HCT116 (cell line): ENCODE measurements at regions of chr3 and their contacts with region 1.

Region 1: GRCh38 chr3:10772271-10773161 is 43.5 kb upstream of the SLC6A11 start:
- DNase-seq: no peak
- ATAC-seq: peak; percentile 94
- H3K4me3 ChIP-seq: no peak overlapping the region
- H3K27ac ChIP-seq: no peak overlapping the region
- H3K4me1 ChIP-seq: peaks cover 0 to 6% of the 10 kb centered on the region in 2 experiments; a peak in 2 of 4 replicates
- H3K27me3 ChIP-seq: peaks cover 13% of the 10 kb centered on the region; the same call in 1 of the 2 replicates
- CTCF ChIP-seq: peak; percentile 70 to 99 (median 90)
- POLR2A ChIP-seq: no peak
- RAD21 ChIP-seq: peak; percentile 60

Region 2: GRCh38 chr3:10122724-10123123 is 649.8 kb before region 1 on chr3:
- CTCF ChIA-PET with region 1: no interaction called
- POLR2A ChIA-PET with region 1: no interaction called
- RAD21 ChIA-PET with region 1: no interaction called
- intact Hi-C with region 1: no loop called
- DNase-seq: no peak
- ATAC-seq: no peak
- H3K4me3 ChIP-seq: no peak overlapping the region
- H3K27ac ChIP-seq: no peak overlapping the region
- H3K4me1 ChIP-seq: no peaks in the 10 kb centered on the region
- H3K27me3 ChIP-seq: no peaks in the 10 kb centered on the region
- CTCF ChIP-seq: no peak
- POLR2A ChIP-seq: no peak
- RAD21 ChIP-seq: no peak

Region 3: DNA sequence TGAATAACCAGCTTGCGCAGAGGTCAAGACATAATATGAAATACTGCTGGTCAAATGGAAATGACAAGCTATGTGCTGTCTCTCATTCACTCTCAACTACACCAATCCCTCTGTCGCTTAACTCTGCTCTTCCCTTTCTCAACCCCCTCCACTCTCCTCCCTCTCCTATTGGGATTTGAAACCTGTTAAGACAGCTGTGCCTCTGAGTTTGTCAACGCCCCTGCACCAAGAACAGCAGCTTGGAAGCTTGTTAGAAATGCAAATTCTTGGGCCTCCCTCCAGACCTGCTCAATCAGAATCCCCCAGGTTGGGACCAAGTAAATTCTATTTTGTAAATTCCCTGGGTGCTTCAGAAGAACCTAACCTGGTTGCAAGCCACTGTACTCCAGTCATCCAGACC is 117.4 kb before region 1 on chr3:
- CTCF ChIA-PET with region 1: no interaction called
- POLR2A ChIA-PET with region 1: no interaction called
- RAD21 ChIA-PET with region 1: no interaction called
- intact Hi-C with region 1: no loop called
- DNase-seq: no peak
- ATAC-seq: no peak
- H3K4me3 ChIP-seq: no peak overlapping the region
- H3K27ac ChIP-seq: no peak overlapping the region
- H3K4me1 ChIP-seq: no peaks in the 10 kb centered on the region
- H3K27me3 ChIP-seq: peaks cover 35% of the 10 kb centered on the region
- CTCF ChIP-seq: no peak
- POLR2A ChIP-seq: no peak
- RAD21 ChIP-seq: no peak

Region 4: DNA sequence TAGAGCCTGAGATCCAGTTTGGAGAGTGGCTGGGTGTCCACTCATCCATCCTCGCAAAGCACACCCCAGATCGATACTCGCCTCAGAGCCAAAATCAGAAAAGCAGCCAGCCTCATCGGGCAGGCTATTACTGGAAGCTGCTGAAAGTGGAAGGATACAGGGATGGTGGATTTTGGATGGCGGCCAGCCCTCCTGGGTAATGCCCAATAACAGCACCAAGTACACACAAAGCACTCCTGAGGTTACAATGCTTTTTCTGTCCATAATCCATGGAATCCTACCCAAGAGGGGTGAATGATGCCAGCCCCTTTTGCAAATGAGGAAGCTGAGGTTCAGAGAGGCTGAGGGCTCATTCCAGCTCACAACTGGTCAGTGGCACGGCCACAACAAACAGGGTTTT is 49.6 kb before region 1 on chr3:
- CTCF ChIA-PET with region 1: no interaction called
- POLR2A ChIA-PET with region 1: no interaction called
- RAD21 ChIA-PET with region 1: no interaction called
- intact Hi-C with region 1: no loop called
- DNase-seq: no peak
- ATAC-seq: no peak
- H3K4me3 ChIP-seq: no peak overlapping the region
- H3K27ac ChIP-seq: no peak overlapping the region
- H3K4me1 ChIP-seq: no peaks in the 10 kb centered on the region
- H3K27me3 ChIP-seq: peaks cover 28% of the 10 kb centered on the region
- CTCF ChIP-seq: no peak
- POLR2A ChIP-seq: no peak
- RAD21 ChIP-seq: no peak

Region 5: DNA sequence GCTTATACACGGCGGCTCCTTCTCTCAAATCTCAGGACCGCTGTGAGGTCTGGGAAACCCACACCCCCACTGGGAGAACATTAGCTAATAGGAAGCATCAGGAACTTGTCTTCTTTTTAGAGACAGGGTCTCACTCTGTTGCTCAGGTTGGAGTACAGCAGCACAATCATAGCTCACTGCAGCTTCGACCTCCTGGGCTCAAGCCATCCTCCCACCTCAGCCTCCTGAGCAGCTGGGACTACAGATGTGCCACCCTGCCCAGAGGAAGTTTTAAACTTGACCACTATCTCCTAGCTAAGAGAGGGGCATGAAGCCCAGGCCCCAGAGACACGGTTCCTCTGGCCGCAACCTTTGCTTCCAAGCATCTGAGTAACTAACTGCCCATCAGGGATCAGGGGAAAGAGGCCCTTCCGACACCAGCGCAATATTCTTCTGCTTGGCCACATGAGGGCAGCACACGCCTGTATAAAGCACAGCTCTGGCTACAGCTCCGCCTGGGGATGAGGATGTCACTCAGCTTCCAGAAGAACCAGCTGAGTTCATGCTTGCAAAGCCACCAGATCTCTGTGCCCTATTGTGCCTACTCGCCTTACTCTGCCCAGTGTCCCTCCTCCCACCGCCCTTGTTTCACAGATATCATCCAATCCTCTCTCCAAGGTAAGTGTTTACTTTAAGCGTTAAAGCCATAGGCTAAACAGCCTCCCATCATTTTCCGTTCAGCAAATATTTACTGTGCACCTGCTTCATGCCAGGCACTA is 14.0 kb before region 1 on chr3:
- CTCF ChIA-PET with region 1: interaction called, 12 read pairs
- POLR2A ChIA-PET with region 1: interaction called, 3 read pairs
- RAD21 ChIA-PET with region 1: interaction called in 1 of 2 experiments, 4 read pairs
- intact Hi-C with region 1: no loop called
- DNase-seq: peak; percentile 51
- ATAC-seq: peak; percentile 97
- H3K4me3 ChIP-seq: no peak overlapping the region
- H3K27ac ChIP-seq: no peak overlapping the region
- H3K4me1 ChIP-seq: no peaks in the 10 kb centered on the region
- H3K27me3 ChIP-seq: peaks cover 37% of the 10 kb centered on the region
- CTCF ChIP-seq: peak; percentile 48 to 94 (median 64); a peak in 5 of 6 replicates
- POLR2A ChIP-seq: no peak
- RAD21 ChIP-seq: peak; percentile 93

Region 6: DNA sequence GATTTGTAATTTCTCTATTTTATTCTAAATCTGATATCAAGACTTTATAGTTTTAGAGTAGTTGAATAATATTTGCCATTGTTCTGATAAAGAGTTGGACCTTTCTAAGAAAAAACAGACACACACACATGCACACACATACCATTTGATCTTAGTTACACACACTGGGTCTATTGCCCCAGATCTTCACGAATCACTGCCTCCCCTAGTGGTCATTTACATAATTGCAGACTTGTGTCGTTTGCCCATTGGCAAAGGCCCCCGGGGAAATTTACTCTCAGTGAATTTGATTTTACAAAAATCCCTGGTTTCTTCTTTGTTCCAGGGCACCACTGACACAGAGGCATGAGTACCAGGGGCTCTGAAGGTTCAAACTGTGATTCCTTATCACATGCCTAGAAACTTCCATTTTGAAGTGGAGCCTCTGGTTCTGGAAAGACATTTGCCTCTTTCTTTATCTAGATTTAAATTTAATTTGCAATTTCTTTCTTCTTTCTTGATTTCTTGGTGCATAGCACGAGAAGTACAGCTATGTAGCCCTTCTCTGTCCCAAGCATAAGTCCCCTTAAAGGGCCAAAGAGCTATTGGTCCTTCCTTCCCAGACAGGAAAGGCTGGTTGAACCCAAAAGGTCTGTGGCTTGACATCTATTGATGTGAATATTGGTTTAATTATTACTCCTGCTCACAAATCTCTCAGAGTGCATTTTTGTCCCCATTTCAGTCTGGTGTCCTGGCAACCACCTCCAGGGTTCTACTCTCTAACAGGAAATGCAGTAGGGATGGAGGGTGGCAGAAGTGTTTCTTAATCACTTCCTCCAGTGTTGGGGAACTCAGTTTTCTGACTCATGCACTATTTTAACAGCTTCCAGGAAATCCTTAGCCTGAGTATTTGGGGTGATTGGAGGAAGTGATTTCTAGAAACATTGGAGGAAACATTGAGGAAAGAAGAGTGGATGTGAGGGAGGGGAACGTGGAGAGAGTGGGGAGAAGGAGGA is 11.1 kb after region 1 on chr3:
- CTCF ChIA-PET with region 1: interaction called, 26 read pairs
- POLR2A ChIA-PET with region 1: no interaction called
- RAD21 ChIA-PET with region 1: no interaction called
- intact Hi-C with region 1: no loop called
- DNase-seq: peak; percentile 28
- ATAC-seq: peak; percentile 87
- H3K4me3 ChIP-seq: no peak overlapping the region
- H3K27ac ChIP-seq: no peak overlapping the region
- H3K4me1 ChIP-seq: no peaks in the 10 kb centered on the region; a peak in 1 of 4 replicates
- H3K27me3 ChIP-seq: peaks cover 22% of the 10 kb centered on the region
- CTCF ChIP-seq: peak; percentile 56 to 85 (median 84)
- POLR2A ChIP-seq: no peak
- RAD21 ChIP-seq: peak; percentile 57

Region 7: GRCh38 chr3:10883478-10884234 is 111.1 kb after region 1 on chr3:
- CTCF ChIA-PET with region 1: interaction called, 11 read pairs
- POLR2A ChIA-PET with region 1: no interaction called
- RAD21 ChIA-PET with region 1: interaction called in 1 of 2 experiments, 3 read pairs
- intact Hi-C with region 1: loop called (anchors 1 kb)
- DNase-seq: peak; percentile 8
- ATAC-seq: peak; percentile 76
- H3K4me3 ChIP-seq: no peak overlapping the region
- H3K27ac ChIP-seq: no peak overlapping the region
- H3K4me1 ChIP-seq: no peaks in the 10 kb centered on the region
- H3K27me3 ChIP-seq: peaks cover 56% of the 10 kb centered on the region
- CTCF ChIP-seq: peak; percentile 76 to 87 (median 77); a peak in 5 of 6 replicates
- POLR2A ChIP-seq: no peak
- RAD21 ChIP-seq: peak; percentile 71